Endothelial cell of umbilical vein (primary cell): ENCODE measurements at regions of chr4 and their contacts with region 1.

Region 1: DNA sequence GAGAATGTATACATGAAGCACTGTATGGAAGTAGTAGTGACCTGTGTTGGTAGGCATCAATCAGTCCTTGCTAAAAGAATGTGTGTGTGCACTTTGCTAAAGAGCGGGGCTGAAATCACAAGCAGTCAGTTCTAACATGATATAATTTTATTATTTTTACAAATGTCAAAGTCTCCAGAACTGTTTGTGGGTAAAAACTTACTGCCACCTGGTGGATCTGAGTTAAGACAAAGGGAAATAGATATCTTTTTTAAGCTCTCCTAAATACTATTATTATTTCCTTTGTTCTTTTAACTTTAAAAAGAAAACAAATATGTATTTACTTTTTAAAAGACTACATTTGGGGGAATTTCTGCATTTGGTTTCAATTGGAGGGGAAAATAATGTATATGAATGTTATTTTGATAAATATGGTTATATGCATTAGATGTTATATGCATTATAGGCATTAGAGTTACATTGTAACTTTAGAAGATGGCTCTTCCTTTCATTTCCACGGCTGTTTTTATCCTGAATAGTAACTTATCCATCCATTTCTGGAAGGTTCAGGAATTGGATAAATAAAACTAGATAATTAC is 7.8 kb upstream of the CLOCK start:
- DNase-seq: peak; percentile 55
- H3K4me3 ChIP-seq: no peak overlapping the region
- H3K27ac ChIP-seq: no peak overlapping the region
- H3K4me1 ChIP-seq: no peaks in the 10 kb centered on the region
- H3K27me3 ChIP-seq: peaks cover under 1 to 2% of the 10 kb centered on the region in 2 experiments
- CTCF ChIP-seq: peak; percentile 14 to 23
- POLR2A ChIP-seq: no peak

Region 2: GRCh38 chr4:55435141-55435841 is 119.3 kb before region 1 on chr4:
- CTCF ChIA-PET with region 1: interaction called, 12 read pairs
- POLR2A ChIA-PET with region 1: no interaction called
- dilution Hi-C with region 1: no loop called
- intact Hi-C with region 1: no loop called
- DNase-seq: peak; percentile 69
- H3K4me3 ChIP-seq: no peak overlapping the region
- H3K27ac ChIP-seq: no peak overlapping the region
- H3K4me1 ChIP-seq: peaks cover 13% of the 10 kb centered on the region
- H3K27me3 ChIP-seq: no peaks in the 10 kb centered on the region
- CTCF ChIP-seq: peak; percentile 24 to 30
- POLR2A ChIP-seq: no peak

Region 3: GRCh38 chr4:55444827-55445226 is 109.7 kb before region 1 on chr4:
- CTCF ChIA-PET with region 1: interaction called, 16 read pairs
- POLR2A ChIA-PET with region 1: no interaction called
- dilution Hi-C with region 1: no loop called
- intact Hi-C with region 1: loop called (anchors 2 kb)
- DNase-seq: peak; percentile 31
- H3K4me3 ChIP-seq: no peak overlapping the region
- H3K27ac ChIP-seq: no peak overlapping the region
- H3K4me1 ChIP-seq: peaks cover 3% of the 10 kb centered on the region
- H3K27me3 ChIP-seq: no peaks in the 10 kb centered on the region
- CTCF ChIP-seq: peak in 1 of 2 donors; percentile 20
- POLR2A ChIP-seq: no peak